Mammary epithelial cell (primary cell): ENCODE measurements at regions of chr3 and their contacts with region 1.

Region 1: GRCh38 chr3:193883551-193883950 is 252.4 kb upstream of the HES1 start:
- DNase-seq: peak; percentile 64
- H3K4me3 ChIP-seq: no peak overlapping the region
- H3K27ac ChIP-seq: peak overlapping the region; percentile 27
- H3K4me1 ChIP-seq: peaks cover 21% of the 10 kb centered on the region
- H3K27me3 ChIP-seq: no peaks in the 10 kb centered on the region
- CTCF ChIP-seq: no peak

Region 2: DNA sequence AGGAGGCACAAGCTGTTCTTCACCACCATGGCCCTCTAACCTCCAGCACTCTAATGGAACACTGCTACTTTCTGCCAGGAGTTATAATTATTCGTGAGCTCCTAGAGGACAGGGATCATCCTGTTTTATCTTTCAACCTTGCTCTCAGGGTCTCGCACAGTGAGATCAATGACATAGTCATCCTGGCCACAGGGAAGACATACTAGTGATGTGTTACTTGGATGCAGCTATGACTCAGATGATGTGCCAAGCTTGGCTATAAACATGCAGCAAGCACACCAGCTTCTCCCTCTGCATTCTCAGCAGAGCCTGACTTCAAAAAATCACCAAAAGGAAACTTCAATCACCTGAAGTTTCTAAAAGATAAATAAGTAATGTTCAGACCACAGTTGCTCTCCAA is 48.6 kb after region 1 on chr3:
- CTCF ChIA-PET with region 1: no interaction called
- dilution Hi-C with region 1: loop called (anchors 5 kb)
- in situ Hi-C with region 1: no loop called
- intact Hi-C with region 1: no loop called
- DNase-seq: peak; percentile 48
- H3K4me3 ChIP-seq: no peak overlapping the region
- H3K27ac ChIP-seq: no peak overlapping the region
- H3K4me1 ChIP-seq: peaks cover 17% of the 10 kb centered on the region
- H3K27me3 ChIP-seq: no peaks in the 10 kb centered on the region
- CTCF ChIP-seq: no peak